ENCODE measurements at regions of chr7 and their contacts with region 1.

Region 1: GRCh38 chr7:83976295-83976694 is 218.3 kb downstream of the SEMA3A start:
- DNase-seq: peak; percentile 73
- H3K4me3 Mint-ChIP-seq: no peak overlapping the region
- H3K27ac Mint-ChIP-seq: no peak overlapping the region
- H3K4me1 Mint-ChIP-seq: no peaks in the 10 kb centered on the region
- H3K27me3 Mint-ChIP-seq: no peaks in the 10 kb centered on the region

Region 2: GRCh38 chr7:84100866-84101265 is 124.6 kb after region 1 on chr7:
- intact Hi-C with region 1: no loop called
- DNase-seq: no peak
- H3K4me3 Mint-ChIP-seq: no peak overlapping the region
- H3K27ac Mint-ChIP-seq: no peak overlapping the region
- H3K4me1 Mint-ChIP-seq: no peaks in the 10 kb centered on the region
- H3K27me3 Mint-ChIP-seq: peaks cover 2% of the 10 kb centered on the region

Region 3: GRCh38 chr7:84188786-84189405 is 212.6 kb after region 1 on chr7:
- intact Hi-C with region 1: loop called (anchors 5 kb)
- DNase-seq: no peak
- H3K4me3 Mint-ChIP-seq: no peak overlapping the region
- H3K27ac Mint-ChIP-seq: no peak overlapping the region
- H3K4me1 Mint-ChIP-seq: peaks cover 10% of the 10 kb centered on the region
- H3K27me3 Mint-ChIP-seq: peaks cover 5% of the 10 kb centered on the region

Region 4: DNA sequence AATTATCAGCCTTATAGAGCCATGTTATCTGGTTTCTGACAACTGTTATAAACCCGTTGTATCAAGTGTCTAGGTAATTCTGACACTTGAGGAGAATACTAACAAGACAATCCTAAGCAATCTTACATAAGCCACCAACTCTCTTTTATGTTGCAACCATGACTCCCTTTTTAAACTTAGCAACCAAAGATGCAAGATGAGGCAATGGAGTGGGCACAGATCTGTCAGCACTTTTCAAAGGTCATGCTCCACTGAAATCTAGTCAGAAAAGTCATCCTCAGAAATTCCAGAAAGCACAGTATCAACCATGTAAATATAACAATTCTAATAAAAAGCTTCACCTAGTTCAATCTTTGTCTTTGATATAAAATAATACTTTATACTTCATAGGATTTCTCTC is 295.2 kb after region 1 on chr7:
- intact Hi-C with region 1: no loop called
- DNase-seq: no peak
- H3K4me3 Mint-ChIP-seq: no peak overlapping the region
- H3K27ac Mint-ChIP-seq: no peak overlapping the region
- H3K4me1 Mint-ChIP-seq: no peaks in the 10 kb centered on the region
- H3K27me3 Mint-ChIP-seq: no peaks in the 10 kb centered on the region

Region 5: DNA sequence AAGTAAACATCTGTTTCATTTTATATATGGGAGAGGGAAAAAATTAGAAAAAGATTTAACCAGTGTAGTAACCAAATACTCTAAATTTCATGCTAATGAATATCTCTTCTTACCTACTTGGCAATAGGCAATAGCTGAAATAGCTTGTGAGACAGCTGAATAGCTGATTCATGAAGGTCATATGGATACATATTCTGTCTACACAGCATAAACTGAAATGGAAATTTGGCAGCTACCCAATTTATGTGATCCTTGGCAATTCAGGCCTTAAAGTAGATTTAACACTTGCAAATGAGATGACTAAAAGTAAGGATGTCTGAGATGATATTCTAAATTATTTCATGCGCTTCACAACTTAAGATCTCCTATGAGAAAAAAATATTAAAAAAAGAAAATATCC is 479.5 kb after region 1 on chr7:
- intact Hi-C with region 1: loop called (anchors 2 kb)
- DNase-seq: no peak
- H3K4me3 Mint-ChIP-seq: no peak overlapping the region
- H3K27ac Mint-ChIP-seq: no peak overlapping the region
- H3K4me1 Mint-ChIP-seq: no peaks in the 10 kb centered on the region
- H3K27me3 Mint-ChIP-seq: no peaks in the 10 kb centered on the region

Region 6: GRCh38 chr7:85023045-85023712 is 1046.9 kb after region 1 on chr7:
- intact Hi-C with region 1: loop called (anchors 1 kb)
- DNase-seq: peak; percentile 77
- H3K4me3 Mint-ChIP-seq: no peak overlapping the region
- H3K27ac Mint-ChIP-seq: no peak overlapping the region
- H3K4me1 Mint-ChIP-seq: no peaks in the 10 kb centered on the region
- H3K27me3 Mint-ChIP-seq: no peaks in the 10 kb centered on the region

Region 7: DNA sequence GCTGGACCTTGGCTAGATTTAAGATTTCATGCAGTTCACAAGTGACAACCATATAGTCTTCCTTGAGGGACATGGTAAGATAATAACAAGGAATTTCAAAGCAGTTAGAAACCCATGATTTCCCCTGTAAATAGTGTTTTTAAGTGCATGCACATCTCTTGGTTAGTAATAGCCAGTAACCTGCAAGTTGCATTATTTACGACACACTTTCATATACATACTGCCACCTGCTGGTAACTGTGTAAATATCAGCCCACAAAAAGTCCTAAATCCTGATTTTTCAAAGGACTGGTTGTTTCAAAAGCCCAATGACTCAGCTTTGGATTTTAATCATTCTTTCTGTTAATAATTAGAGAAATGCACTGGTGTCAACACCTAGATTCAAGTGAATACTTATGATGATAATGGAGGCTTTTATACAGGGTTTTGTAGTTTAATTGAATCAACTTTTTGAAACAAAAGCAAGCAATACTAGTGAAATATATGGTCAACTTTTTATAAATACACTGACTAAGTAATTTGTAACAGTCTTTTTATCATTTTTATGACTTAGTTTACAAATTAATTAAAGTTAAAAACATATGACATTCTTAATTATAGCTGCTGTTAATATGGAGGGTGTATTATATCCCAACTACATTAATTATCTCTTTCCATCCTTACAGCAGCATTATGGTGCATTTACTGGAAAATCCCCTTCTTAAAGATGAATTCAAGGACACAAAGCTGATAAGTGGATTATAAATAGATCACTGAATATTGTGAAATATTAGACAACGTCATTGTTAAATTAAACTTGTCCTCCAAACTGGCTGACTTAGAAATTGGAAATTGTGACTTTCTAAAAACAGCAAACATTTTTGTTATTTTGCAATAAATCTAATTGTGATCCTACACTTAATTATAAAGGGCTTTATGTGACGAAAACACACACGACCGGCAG is 1578.2 kb after region 1 on chr7:
- intact Hi-C with region 1: loop called (anchors 2 kb)
- DNase-seq: peak; percentile 65
- H3K4me3 Mint-ChIP-seq: no peak overlapping the region
- H3K27ac Mint-ChIP-seq: no peak overlapping the region
- H3K4me1 Mint-ChIP-seq: no peaks in the 10 kb centered on the region
- H3K27me3 Mint-ChIP-seq: no peaks in the 10 kb centered on the region

Measured in activated CD4-positive, alpha-beta T cell treated with anti-CD3 and anti-CD28 coated beads, Interleukin-2, amount 10 ng/mL, durations not matched to agents 24 days and 14 days (primary cell).